Gastrocnemius medialis (tissue), 4 donors: ENCODE measurements at regions of chr2 and their contacts with region 1.

Region 1: DNA sequence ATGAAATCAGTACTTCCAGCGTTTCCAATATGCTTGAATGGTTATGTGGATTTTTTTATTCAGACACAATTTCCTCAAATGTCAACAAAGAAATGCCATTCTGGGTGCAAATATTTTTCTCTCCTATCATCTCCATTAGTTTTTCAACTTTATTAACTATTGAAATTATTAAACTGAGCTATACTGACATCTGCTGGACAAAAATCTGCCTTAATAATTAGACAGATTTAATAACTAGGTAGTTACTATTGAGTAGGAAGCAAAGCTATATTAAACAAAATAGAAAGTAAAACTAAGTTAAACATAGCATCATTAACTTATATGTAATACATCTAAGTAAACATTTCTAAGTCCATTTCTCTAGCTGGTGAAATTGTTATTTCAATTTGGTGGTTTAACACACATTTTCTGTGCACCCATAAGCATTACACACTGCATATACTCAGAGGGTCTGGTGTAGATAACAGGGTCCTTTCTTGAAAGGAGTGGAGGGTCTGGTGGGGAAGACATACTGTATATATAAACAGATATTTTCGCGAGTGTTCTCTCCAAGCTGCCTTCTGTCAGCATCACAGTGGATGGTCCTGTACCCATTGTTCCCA is 77.0 kb downstream of the LANCL1 start:
- DNase-seq: no peak
- ATAC-seq: peak in 1 of 2 donors; percentile 49
- H3K4me3 ChIP-seq: no peak overlapping the region
- H3K27ac ChIP-seq: no peak overlapping the region
- H3K4me1 ChIP-seq: peaks cover 17 to 19% of the 10 kb centered on the region in 2 donors
- H3K27me3 ChIP-seq: no peaks in the 10 kb centered on the region
- CTCF ChIP-seq: peak; percentile 53 to 70 (median 57)
- POLR2A ChIP-seq: no peak

Region 2: DNA sequence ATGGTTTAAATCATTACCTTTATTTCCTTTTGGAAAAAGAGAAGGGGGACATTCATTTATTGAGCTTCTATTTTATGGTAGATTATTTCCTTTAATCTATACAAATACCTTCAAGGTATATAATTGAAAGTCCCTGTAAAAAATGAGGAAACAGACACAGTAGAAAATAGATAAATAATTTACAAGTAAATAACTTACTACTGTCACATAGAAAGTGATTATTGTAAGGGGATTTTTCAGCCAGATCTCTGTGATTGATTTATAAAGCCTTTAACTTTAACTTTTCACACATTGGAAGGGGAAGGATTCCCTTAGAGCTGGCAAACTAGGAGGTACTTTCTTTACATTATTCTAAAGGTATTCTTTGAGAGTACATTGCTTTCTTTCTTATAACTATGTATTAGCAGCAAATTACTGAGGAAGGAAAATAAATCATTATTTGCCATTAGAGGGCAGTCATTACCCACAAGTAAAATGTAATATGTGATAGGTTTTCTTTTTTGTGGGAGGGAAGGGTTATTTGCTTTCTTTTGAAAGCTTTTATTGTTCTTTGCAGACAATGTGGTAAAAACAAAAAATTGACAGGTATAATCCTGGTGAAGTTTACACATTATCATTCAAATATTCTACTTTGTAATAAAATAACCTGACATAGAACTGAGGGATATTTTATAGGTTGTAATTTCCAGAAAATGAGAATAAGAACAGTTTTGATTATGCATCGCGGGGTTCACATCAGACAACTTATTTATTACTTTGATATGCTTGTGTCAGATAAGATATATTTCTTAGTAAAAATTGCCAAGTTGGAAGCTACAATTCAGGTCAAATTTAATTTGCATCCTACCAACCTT is 421.9 kb before region 1 on chr2:
- in situ Hi-C with region 1: loop called in 1 of 4 experiments (anchors 25 kb)
- intact Hi-C with region 1: loop called (anchors 10 kb)
- DNase-seq: no peak
- ATAC-seq: no peak
- H3K4me3 ChIP-seq: no peak overlapping the region
- H3K27ac ChIP-seq: no peak overlapping the region
- H3K4me1 ChIP-seq: no peaks in the 10 kb centered on the region
- H3K27me3 ChIP-seq: no peaks in the 10 kb centered on the region
- CTCF ChIP-seq: peak; percentile 47 to 92 (median 63)
- POLR2A ChIP-seq: no peak

Region 3: GRCh38 chr2:210252699-210253606 is 146.6 kb before region 1 on chr2:
- in situ Hi-C with region 1: loop called (anchors 5 kb)
- intact Hi-C with region 1: loop called (anchors 1 kb)
- DNase-seq: no peak
- ATAC-seq: no peak
- H3K4me3 ChIP-seq: no peak overlapping the region
- H3K27ac ChIP-seq: no peak overlapping the region
- H3K4me1 ChIP-seq: peaks cover 0 to 7% of the 10 kb centered on the region in 2 donors
- H3K27me3 ChIP-seq: no peaks in the 10 kb centered on the region
- CTCF ChIP-seq: no peak
- POLR2A ChIP-seq: no peak

Region 4: GRCh38 chr2:210445116-210445707 is 45.7 kb after region 1 on chr2:
- in situ Hi-C with region 1: no loop called
- intact Hi-C with region 1: no loop called
- DNase-seq: no peak
- ATAC-seq: no peak
- H3K4me3 ChIP-seq: no peak overlapping the region
- H3K27ac ChIP-seq: no peak overlapping the region
- H3K4me1 ChIP-seq: no peaks in the 10 kb centered on the region
- H3K27me3 ChIP-seq: no peaks in the 10 kb centered on the region
- CTCF ChIP-seq: peak; percentile 16 to 75 (median 54)
- POLR2A ChIP-seq: no peak

Region 5: GRCh38 chr2:210558708-210559107 is 159.2 kb after region 1 on chr2:
- in situ Hi-C with region 1: no loop called
- intact Hi-C with region 1: no loop called
- DNase-seq: no peak
- ATAC-seq: no peak
- H3K4me3 ChIP-seq: no peak overlapping the region
- H3K27ac ChIP-seq: no peak overlapping the region
- H3K4me1 ChIP-seq: no peaks in the 10 kb centered on the region
- H3K27me3 ChIP-seq: no peaks in the 10 kb centered on the region
- CTCF ChIP-seq: no peak
- POLR2A ChIP-seq: no peak